Mammary epithelial cell (primary cell): ENCODE measurements at regions of chr12 and their contacts with region 1.

Region 1: DNA sequence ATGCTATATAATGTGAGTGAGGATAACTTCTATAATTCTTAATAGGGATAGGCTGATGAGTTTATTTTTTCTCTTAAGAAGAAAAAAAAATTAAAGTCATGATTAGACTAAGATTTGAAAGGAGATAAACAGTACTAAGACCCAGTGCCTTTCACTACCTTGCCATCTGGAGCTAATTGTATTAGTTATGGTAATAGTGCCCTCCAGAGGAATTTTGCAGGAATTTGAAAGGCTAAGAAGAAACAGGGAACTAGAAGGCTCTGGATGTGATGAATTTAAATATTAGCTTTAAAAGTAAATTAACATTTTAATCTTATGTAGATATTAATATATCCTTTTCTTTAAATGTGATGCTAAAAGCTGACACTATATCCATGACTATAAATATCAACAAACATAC is 36.6 kb upstream of the PIK3C2G start:
- DNase-seq: peak; percentile 34
- H3K4me3 ChIP-seq: no peak overlapping the region
- H3K27ac ChIP-seq: no peak overlapping the region
- H3K4me1 ChIP-seq: no peaks in the 10 kb centered on the region
- H3K27me3 ChIP-seq: no peaks in the 10 kb centered on the region
- CTCF ChIP-seq: peak; percentile 52 to 63

Region 2: GRCh38 chr12:17928708-17929366 is 295.9 kb before region 1 on chr12:
- CTCF ChIA-PET with region 1: no interaction called
- dilution Hi-C with region 1: no loop called
- in situ Hi-C with region 1: no loop called
- intact Hi-C with region 1: loop called (anchors 5 kb)
- DNase-seq: peak; percentile 79
- H3K4me3 ChIP-seq: no peak overlapping the region
- H3K27ac ChIP-seq: peak overlapping the region; percentile 31
- H3K4me1 ChIP-seq: peaks cover 9% of the 10 kb centered on the region
- H3K27me3 ChIP-seq: no peaks in the 10 kb centered on the region
- CTCF ChIP-seq: peak; percentile 48 to 58

Region 3: DNA sequence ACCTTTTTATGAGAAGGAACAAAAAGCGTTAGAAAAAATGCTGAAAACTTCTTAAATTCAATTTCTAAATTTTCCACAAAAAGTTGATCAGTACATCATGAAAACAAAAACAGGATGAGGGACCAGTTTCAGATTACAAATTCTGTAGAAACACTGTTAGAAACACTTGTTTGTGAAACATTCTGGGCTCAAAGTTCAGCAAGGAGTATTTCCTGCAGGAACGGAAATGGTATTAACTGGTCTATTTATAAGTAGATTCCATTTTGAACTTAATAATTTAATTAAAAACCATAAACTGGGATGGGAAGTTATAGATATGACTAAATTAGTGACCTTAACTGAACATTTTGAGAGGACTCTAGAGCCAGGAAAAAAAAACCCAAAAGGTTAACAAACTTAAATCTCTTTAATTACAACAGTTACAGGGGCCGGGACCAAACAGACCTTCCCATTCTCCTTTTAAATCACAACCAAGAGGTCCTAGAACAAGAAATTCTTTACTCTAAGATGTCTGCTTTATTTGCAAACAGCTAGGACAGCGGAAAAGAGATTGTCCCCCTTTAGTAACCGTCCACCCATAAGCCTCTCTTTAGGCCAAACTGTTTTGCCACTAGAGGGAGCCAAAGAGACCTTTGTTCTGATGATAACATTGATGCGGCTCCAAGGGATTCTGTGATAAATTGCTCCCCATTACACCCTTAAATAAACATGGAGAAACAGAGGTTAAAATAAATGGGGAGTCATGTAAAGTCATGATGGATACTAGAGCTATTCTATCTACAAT is 65.8 kb before region 1 on chr12:
- CTCF ChIA-PET with region 1: interaction called, 3 read pairs
- dilution Hi-C with region 1: no loop called
- in situ Hi-C with region 1: no loop called
- intact Hi-C with region 1: loop called (anchors 1 kb)
- DNase-seq: peak; percentile 26
- H3K4me3 ChIP-seq: no peak overlapping the region
- H3K27ac ChIP-seq: no peak overlapping the region
- H3K4me1 ChIP-seq: peaks cover 5% of the 10 kb centered on the region
- H3K27me3 ChIP-seq: no peaks in the 10 kb centered on the region
- CTCF ChIP-seq: peak; percentile 79 to 86

Region 4: GRCh38 chr12:18183141-18183540 is 41.6 kb before region 1 on chr12:
- CTCF ChIA-PET with region 1: no interaction called
- dilution Hi-C with region 1: no loop called
- in situ Hi-C with region 1: no loop called
- intact Hi-C with region 1: no loop called
- DNase-seq: no peak
- H3K4me3 ChIP-seq: no peak overlapping the region
- H3K27ac ChIP-seq: no peak overlapping the region
- H3K4me1 ChIP-seq: no peaks in the 10 kb centered on the region
- H3K27me3 ChIP-seq: peaks cover 2% of the 10 kb centered on the region
- CTCF ChIP-seq: no peak

Region 5: GRCh38 chr12:18262514-18262913 is 37.8 kb after region 1 on chr12:
- CTCF ChIA-PET with region 1: no interaction called
- dilution Hi-C with region 1: no loop called
- in situ Hi-C with region 1: no loop called
- intact Hi-C with region 1: no loop called
- DNase-seq: peak; percentile 96
- H3K4me3 ChIP-seq: peak overlapping the region; percentile 45 to 99 (median 66)
- H3K27ac ChIP-seq: peak overlapping the region; percentile 97
- H3K4me1 ChIP-seq: peaks cover 7% of the 10 kb centered on the region
- H3K27me3 ChIP-seq: no peaks in the 10 kb centered on the region
- CTCF ChIP-seq: no peak